Transverse colon (tissue), 4 donors: ENCODE measurements at regions of chrX and their contacts with region 1.

Region 1: DNA sequence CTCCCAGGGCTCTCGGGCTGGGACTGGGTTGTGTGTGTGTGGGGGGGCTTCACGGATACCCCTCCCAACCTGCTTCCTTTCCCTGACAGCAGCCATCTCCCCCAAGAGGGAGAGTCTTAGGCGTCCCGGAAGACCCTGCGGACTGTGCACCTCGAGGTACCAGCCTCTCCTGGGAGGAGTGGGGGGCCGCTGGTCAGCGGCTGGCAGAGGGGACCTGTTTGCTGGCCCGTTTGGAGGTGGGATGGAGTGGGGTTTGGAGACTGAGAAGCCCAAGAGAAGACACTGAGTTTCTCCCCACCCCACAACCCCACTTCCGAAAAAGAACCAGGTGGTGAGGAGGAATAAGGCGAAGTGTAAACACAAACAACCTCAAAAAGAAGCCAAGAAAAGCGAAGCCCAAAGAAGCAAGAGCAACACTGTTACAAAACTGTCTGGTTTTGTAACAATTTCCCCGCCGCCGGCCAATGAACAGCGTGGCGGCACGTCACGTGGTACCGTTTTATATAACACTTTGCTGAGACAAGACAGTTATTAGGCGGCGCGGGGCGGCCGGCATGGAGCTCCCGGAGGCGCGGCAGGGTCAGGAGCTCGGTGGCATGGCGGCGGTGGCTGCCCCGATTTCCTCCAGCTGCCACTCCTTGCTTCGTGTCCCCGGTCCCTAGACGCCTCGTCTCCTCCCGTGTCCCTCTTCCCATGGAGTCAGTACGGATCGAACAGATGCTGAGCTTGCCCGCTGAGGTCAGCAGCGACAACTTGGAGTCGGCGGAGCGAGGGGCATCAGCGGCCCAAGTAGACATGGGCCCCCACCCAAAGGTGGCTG is at the start of gene LONRF3:
- DNase-seq: peak; percentile 79
- H3K4me3 ChIP-seq: peak within 1 kb of the TSS; percentile 38 to 66 (median 46)
- H3K27ac ChIP-seq: peak within 1 kb of the TSS; percentile 86 to 92 (median 88)
- H3K4me1 ChIP-seq: peaks cover 0 to 19% (median 5%) of the 10 kb centered on the region in 4 donors
- H3K27me3 ChIP-seq: peaks cover 9% of the 10 kb centered on the region
- CTCF ChIP-seq: no peak
- EP300 ChIP-seq: no peak
- POLR2A ChIP-seq: peak; percentile 83
- total RNA-seq, gene LONRF3: 2.8 to 27.3 (median 17.3) TPM

Region 2: DNA sequence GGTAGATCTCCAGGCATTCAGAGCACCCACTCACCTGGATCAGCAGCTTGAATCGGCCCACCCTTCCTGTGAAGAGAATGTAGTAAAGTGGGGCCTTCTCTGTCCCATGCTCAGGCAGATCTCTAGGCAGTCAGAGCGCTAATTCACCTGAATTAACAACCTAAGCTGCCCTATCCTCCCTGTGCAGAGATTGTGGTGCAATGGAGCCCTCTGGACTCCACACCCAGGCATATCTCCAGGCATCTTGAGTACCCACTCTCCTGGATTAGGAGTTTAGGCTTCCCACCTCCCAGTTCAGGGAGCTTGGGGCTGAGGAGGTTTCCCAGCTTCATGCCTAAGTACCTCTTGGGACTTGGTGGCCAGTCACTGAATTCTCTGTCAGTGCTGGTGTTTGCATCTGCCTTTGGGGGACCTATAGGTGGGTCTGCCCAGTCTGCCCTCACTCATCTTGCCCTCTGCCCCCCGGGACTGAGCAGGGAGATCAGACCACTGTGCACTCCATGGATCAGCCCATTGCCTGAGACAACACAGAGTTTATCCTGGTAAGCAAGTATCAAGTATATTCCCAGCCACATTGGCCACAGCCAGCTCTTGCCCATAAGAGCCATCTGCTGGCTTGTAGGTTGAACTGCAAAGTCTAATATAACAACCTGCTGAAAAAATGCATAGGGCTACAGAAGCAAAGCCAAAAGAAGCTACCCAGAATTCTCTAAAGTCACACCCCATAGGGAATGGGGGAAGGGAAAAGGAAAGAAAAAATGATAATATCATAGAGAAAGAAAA is 1230.6 kb before region 1 on chrX:
- in situ Hi-C with region 1: no loop called
- intact Hi-C with region 1: no loop called
- DNase-seq: peak; percentile 9
- H3K4me3 ChIP-seq: no peak overlapping the region
- H3K27ac ChIP-seq: no peak overlapping the region
- H3K4me1 ChIP-seq: no peaks in the 10 kb centered on the region
- H3K27me3 ChIP-seq: no peaks in the 10 kb centered on the region
- CTCF ChIP-seq: peak in 4 of 5 experiments; percentile 19 to 37 (median 27)
- EP300 ChIP-seq: no peak
- POLR2A ChIP-seq: no peak

Region 3: DNA sequence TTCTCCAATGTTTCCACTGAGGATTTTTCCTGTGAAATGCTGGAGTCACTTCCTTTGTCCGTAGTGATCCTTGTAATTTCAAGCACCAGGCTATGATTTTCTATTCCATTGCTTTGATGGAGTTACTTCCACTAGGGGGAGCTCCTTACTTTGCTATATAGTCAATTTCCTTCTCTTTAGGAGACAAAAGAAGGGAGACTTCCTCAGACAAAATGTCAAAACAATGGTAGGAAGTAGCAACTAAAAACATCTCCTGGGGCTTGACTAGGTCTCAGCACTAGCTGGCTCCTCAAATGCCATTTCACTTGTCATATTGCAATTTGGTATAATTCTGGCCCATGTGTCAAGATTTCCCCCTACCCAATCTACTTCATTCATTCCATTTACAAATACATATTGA is 126.6 kb before region 1 on chrX:
- in situ Hi-C with region 1: no loop called
- intact Hi-C with region 1: loop called (anchors 10 kb)
- DNase-seq: no peak
- H3K4me3 ChIP-seq: no peak overlapping the region
- H3K27ac ChIP-seq: no peak overlapping the region
- H3K4me1 ChIP-seq: no peaks in the 10 kb centered on the region
- H3K27me3 ChIP-seq: no peaks in the 10 kb centered on the region
- CTCF ChIP-seq: peak; percentile 45 to 64 (median 57)
- EP300 ChIP-seq: no peak
- POLR2A ChIP-seq: no peak